CD4-positive, alpha-beta T cell (primary cell): ENCODE measurements at regions of chr22 and their contacts with region 1.

Region 1: DNA sequence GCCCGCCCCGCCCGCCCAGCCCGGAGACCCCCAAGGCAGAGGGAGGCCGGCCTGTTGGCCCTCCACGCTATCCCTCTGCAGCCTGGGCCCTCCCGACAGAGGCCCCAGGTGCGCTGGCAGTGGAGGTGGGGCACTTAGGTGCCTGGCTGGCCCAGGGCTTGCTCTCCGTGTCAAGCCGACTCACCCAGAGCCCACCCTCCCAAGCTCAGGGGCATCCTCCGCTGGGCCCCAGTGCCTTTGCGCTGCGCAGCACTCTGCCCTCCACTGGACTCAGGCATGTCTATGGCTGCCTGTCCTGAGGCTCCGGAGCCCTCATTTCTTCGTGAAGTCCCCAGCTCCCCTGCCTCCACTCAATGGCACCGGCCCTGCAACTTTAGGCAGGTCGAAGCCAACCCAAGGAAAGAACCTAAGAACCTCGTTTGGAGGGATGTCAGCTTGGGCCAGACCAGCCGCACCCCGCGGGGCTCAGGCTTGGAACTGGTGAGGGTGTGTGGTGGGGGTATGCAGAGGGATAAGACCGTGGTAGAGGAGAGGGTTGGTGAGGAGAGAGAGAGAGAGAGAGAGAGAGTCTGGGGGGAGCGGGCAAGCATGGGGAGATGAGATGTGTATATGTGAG is 6.1 kb downstream of the SMIM45 start:
- DNase-seq: no peak
- ATAC-seq: peak; percentile 39
- H3K4me3 ChIP-seq: no peak overlapping the region
- H3K4me3 Mint-ChIP-seq: no peak overlapping the region
- H3K27ac ChIP-seq: no peak overlapping the region
- H3K27ac Mint-ChIP-seq: no peak overlapping the region
- H3K4me1 ChIP-seq: peaks cover 14% of the 10 kb centered on the region
- H3K4me1 Mint-ChIP-seq: peaks cover 4% of the 10 kb centered on the region
- H3K27me3 ChIP-seq: no peaks in the 10 kb centered on the region
- H3K27me3 Mint-ChIP-seq: no peaks in the 10 kb centered on the region
- CTCF ChIP-seq: peak; percentile 60

Region 2: DNA sequence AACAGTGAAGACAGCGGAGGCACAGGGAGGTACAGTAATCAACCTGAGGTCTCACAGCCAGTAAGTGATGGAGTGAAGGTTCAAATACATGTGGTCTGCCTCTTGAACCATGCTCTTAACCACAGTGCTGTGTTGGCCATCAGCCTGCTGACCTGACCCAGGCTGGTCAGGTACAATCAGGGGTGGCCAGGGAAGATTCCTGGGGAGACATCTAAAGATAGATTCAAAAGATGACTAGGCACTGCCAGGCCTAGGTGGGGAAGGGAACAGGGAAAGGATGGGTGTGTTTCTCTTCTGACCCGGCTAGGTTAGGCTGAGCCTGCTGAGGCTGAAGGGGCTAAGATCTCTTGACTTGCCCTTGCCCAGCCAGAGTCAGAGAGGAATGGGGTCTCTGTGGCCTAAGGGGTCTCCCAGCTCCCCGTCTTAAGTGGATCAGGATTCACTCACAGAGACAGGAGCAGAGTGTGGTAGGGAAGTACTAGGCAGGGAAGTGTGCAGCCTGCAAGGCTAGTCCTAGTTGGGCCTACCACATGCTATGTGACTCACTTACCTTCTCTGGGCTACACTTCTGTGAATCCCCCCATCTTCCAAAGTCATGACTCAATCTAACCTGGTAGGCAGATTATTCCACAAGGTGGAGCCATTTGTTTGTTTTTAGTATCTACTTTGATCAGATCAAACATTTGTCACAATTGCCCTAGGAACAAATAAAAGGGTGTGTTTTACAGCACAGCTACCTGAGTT is 135.6 kb before region 1 on chr22:
- CTCF ChIA-PET with region 1: no interaction called
- POLR2A ChIA-PET with region 1: no interaction called
- intact Hi-C with region 1: loop called in 1 of 2 experiments (anchors 1 kb)
- DNase-seq: peak in 6 of 14 experiments; percentile 6 to 87 (median 66)
- ATAC-seq: peak; percentile 92
- H3K4me3 ChIP-seq: no peak overlapping the region
- H3K4me3 Mint-ChIP-seq: no peak overlapping the region
- H3K27ac ChIP-seq: no peak overlapping the region
- H3K27ac Mint-ChIP-seq: peak overlapping the region; percentile 69
- H3K4me1 ChIP-seq: peaks cover 5% of the 10 kb centered on the region
- H3K4me1 Mint-ChIP-seq: peaks cover 18% of the 10 kb centered on the region
- H3K27me3 ChIP-seq: no peaks in the 10 kb centered on the region
- H3K27me3 Mint-ChIP-seq: no peaks in the 10 kb centered on the region
- CTCF ChIP-seq: peak; percentile 60